ENCODE measurements at regions of chr15 and their contacts with region 1.

Region 1: GRCh38 chr15:34209421-34210282 is at the start of gene KATNBL1:
- DNase-seq: peak; percentile 98
- ATAC-seq: peak; percentile 99 to 100
- total RNA-seq, gene KATNBL1: 18.9 to 24.8 TPM

Region 2: GRCh38 chr15:34056936-34057335 is 152.7 kb before region 1 on chr15:
- intact Hi-C with region 1: loop called (anchors 1 to 5 kb)
- DNase-seq: no peak
- ATAC-seq: no peak

Region 3: GRCh38 chr15:34065941-34066340 is 143.7 kb before region 1 on chr15:
- intact Hi-C with region 1: loop called (anchors 1 to 5 kb)
- DNase-seq: no peak
- ATAC-seq: no peak

Region 4: GRCh38 chr15:34109797-34110663 is 99.6 kb before region 1 on chr15:
- intact Hi-C with region 1: loop called (anchors 5 kb)
- DNase-seq: no peak
- ATAC-seq: no peak